ENCODE measurements at regions of chr6 and their contacts with region 1.

Region 1: GRCh38 chr6:26322645-26323482 is 42.1 kb upstream of the BTN3A2 start:
- DNase-seq: peak; percentile 90
- H3K4me3 ChIP-seq: peak overlapping the region; percentile 50 to 85 (median 85)
- H3K27ac ChIP-seq: peak overlapping the region; percentile 44
- H3K4me1 ChIP-seq: peaks cover 6% of the 10 kb centered on the region
- H3K27me3 ChIP-seq: no peaks in the 10 kb centered on the region
- CTCF ChIP-seq: no peak
- POLR2A ChIP-seq: no peak

Region 2: GRCh38 chr6:25717866-25718740 is 604.8 kb before region 1 on chr6:
- CTCF ChIA-PET with region 1: no interaction called
- POLR2A ChIA-PET with region 1: no interaction called
- dilution Hi-C with region 1: no loop called
- intact Hi-C with region 1: no loop called
- DNase-seq: peak; percentile 48
- H3K4me3 ChIP-seq: no peak overlapping the region
- H3K27ac ChIP-seq: no peak overlapping the region
- H3K4me1 ChIP-seq: peaks cover 23% of the 10 kb centered on the region
- H3K27me3 ChIP-seq: no peaks in the 10 kb centered on the region
- CTCF ChIP-seq: peak; percentile 35 to 42
- POLR2A ChIP-seq: no peak

Region 3: GRCh38 chr6:26249957-26250697 is 72.7 kb before region 1 on chr6:
- CTCF ChIA-PET with region 1: no interaction called
- POLR2A ChIA-PET with region 1: interaction called, 3 read pairs
- dilution Hi-C with region 1: no loop called
- intact Hi-C with region 1: loop called (anchors 2 kb)
- DNase-seq: peak; percentile 87
- H3K4me3 ChIP-seq: peak overlapping the region; percentile 27 to 85 (median 49)
- H3K27ac ChIP-seq: peak overlapping the region; percentile 67
- H3K4me1 ChIP-seq: peaks cover 3% of the 10 kb centered on the region
- H3K27me3 ChIP-seq: no peaks in the 10 kb centered on the region
- CTCF ChIP-seq: peak; percentile 28 to 52
- POLR2A ChIP-seq: peak; percentile 87

Region 4: GRCh38 chr6:26312501-26313390 is 10.1 kb before region 1 on chr6:
- CTCF ChIA-PET with region 1: interaction called, 4 read pairs
- POLR2A ChIA-PET with region 1: no interaction called
- dilution Hi-C with region 1: no loop called
- intact Hi-C with region 1: loop called (anchors 1 kb)
- DNase-seq: peak; percentile 83
- H3K4me3 ChIP-seq: peak overlapping the region; percentile 39 to 98 (median 95)
- H3K27ac ChIP-seq: peak overlapping the region; percentile 38
- H3K4me1 ChIP-seq: peaks cover 12% of the 10 kb centered on the region
- H3K27me3 ChIP-seq: peaks cover 4 to 9% of the 10 kb centered on the region in 2 experiments
- CTCF ChIP-seq: no peak
- POLR2A ChIP-seq: no peak

Region 5: DNA sequence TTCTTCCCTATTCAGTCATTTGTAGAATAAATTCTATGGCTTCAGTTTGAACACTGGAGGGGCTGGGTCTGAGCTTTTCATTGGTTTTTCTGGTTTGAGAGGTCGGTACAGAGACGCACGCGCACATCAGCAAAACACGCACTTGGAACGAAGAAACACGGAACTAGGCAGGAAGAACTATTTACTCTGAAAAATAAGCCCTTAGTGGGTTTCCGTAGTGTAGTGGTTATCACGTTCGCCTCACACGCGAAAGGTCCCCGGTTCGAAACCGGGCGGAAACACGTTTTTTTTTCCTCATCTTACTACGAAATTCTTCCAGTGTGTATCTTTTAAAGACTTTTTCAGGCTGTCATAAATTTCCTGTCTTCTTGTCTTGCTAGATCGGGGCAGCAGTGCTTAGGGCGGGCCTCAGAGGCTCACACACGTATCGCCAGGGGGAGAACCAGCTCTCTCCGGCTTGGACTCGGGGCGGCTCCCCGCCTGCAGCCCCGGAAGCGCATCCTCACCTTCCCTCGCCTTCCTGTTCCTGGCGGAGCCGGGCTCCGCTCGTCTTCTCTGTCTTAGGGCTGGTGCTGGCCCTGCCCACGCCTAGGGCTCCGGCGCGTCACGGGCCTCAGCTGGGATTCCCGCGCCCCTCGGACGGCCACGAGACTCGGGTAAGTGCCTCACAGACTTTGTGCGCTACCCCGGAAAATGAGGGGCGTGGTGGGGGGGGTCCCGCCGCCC is 215.1 kb after region 1 on chr6 and contains the start of gene HMGN4:
- CTCF ChIA-PET with region 1: interaction called, 5 read pairs
- POLR2A ChIA-PET with region 1: no interaction called
- dilution Hi-C with region 1: loop called (anchors 25 kb)
- intact Hi-C with region 1: no loop called
- DNase-seq: peak; percentile 93
- H3K4me3 ChIP-seq: peak within 1 kb of the TSS; percentile 87 to 99 (median 98)
- H3K27ac ChIP-seq: peak within 1 kb of the TSS; percentile 85
- H3K4me1 ChIP-seq: peaks cover 21% of the 10 kb centered on the region
- H3K27me3 ChIP-seq: no peaks in the 10 kb centered on the region
- CTCF ChIP-seq: no peak
- POLR2A ChIP-seq: no peak
- total RNA-seq, gene HMGN4: 33.7 and 36.9 TPM in 2 replicates

Region 6: DNA sequence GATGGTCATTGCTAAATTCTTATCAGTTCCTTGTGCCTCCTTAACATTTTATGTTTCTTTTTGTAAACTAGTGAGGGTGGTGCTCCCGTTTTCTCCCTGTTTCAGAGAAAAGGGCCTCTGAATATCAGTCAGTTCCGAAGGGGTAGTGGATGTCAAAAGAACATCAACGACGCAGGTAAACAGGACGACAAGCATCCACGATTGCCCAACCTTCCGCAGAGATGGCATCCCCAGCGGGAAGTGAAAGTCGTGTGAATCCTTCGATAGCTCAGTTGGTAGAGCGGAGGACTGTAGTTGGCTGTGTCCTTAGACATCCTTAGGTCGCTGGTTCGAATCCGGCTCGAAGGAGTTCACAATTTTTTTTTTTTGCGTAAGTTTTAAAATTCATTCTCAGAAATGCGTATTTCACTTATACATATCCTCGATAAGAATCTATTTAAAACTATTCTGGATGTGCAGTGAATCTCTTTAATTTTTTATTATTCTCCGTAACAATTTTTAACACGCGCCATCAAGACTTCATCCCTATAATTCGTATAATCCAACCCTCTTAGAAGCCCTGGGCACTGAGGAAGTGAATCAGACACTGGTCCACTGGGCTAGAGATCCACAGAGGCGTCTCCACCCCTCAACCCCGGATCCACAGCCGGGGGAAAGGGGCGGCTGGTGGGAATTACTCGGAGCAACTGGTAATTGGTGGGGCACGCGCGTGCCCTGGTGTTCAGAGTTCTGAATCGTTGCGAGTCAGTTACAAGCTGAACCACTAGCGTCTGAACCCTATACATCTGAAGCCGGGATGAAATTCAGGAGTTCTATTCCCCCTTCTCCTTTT is 246.0 kb after region 1 on chr6:
- CTCF ChIA-PET with region 1: interaction called, 4 read pairs
- POLR2A ChIA-PET with region 1: no interaction called
- dilution Hi-C with region 1: no loop called
- intact Hi-C with region 1: loop called (anchors 1 kb)
- DNase-seq: peak; percentile 97
- H3K4me3 ChIP-seq: peak overlapping the region; percentile 50 to 95 (median 90)
- H3K27ac ChIP-seq: no peak overlapping the region
- H3K4me1 ChIP-seq: peaks cover 6% of the 10 kb centered on the region
- H3K27me3 ChIP-seq: no peaks in the 10 kb centered on the region
- CTCF ChIP-seq: peak in 1 of 2 donors; percentile 46
- POLR2A ChIP-seq: no peak

Region 7: DNA sequence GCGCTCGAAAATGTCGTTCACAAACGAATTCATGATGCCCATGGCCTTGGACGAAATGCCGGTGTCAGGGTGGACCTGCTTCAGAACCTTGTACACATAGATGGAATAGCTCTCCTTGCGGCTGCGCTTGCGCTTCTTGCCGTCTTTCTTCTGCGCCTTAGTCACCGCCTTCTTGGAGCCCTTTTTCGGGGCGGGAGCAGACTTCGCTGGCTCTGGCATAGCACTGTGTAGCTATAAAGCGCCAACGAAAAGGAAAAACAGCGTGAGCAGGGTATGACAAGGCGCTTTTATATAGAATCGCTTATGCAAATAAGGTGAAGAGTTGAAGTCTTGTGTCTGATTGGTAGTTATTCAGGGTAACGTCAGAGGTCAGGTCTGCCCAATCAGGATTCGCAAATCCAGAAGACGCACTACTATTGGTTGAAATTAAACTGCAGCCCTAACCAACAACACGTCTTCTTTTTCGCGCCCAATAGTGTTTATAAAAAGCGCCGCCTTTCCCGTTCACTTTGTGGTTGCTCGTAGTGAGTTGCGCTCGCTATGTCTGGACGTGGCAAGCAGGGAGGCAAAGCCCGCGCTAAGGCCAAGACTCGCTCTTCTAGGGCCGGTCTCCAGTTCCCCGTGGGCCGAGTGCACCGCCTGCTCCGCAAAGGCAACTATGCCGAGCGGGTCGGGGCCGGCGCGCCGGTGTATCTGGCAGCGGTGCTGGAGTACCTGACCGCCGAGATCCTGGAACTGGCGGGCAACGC is 809.8 kb after region 1 on chr6:
- CTCF ChIA-PET with region 1: no interaction called
- POLR2A ChIA-PET with region 1: no interaction called
- dilution Hi-C with region 1: no loop called
- intact Hi-C with region 1: loop called (anchors 10 kb)
- DNase-seq: peak; percentile 100
- H3K4me3 ChIP-seq: peak overlapping the region; percentile 37 to 81 (median 59)
- H3K27ac ChIP-seq: peak overlapping the region; percentile 86
- H3K4me1 ChIP-seq: peaks cover 19% of the 10 kb centered on the region
- H3K27me3 ChIP-seq: no peaks in the 10 kb centered on the region
- CTCF ChIP-seq: no peak
- POLR2A ChIP-seq: peak; percentile 76

Region 8: DNA sequence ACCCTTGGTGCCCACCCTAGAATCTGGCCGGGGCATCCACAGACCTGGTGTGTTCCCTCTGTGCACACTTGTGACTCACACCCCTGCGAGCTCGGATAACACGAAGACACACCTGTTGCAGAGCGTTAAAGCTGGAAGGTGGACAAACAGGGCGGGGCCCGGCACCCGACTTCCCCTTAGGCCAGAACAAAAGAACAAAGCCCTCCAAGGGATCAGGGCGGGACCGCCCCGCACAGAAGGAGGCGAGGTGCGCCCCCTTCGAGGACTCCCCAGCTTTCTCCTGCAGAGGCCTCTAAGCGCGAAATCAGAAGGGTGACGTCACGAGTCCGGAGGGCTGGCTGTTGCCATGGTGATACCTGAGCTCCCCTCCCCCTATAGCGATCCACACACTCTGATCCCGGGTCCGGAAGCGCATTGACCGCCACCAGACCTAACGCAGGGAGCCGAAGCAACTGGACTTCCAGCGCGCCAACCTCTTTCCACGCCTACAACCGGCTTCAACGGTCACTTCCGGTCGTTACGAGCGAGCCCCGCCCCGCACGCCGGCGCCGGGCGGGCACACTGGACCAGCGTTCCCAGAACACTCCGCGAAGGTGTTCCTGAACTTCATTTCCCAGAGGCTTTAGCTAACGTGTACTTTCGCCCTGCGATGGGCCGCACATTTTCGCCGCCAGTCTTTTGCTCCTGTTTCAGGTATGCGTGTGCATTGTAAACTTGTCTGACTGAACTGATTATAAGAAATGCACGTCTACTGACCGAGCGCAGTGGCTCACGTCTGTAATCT is 1149.9 kb after region 1 on chr6 and contains the start of gene ZNF184:
- CTCF ChIA-PET with region 1: no interaction called
- POLR2A ChIA-PET with region 1: no interaction called
- dilution Hi-C with region 1: no loop called
- intact Hi-C with region 1: loop called (anchors 10 kb)
- DNase-seq: peak; percentile 98
- H3K4me3 ChIP-seq: peak within 1 kb of the TSS; percentile 68 to 94 (median 82)
- H3K27ac ChIP-seq: peak within 1 kb of the TSS; percentile 74
- H3K4me1 ChIP-seq: peaks cover 9% of the 10 kb centered on the region
- H3K27me3 ChIP-seq: peaks cover 9 to 14% of the 10 kb centered on the region in 2 experiments
- CTCF ChIP-seq: no peak
- POLR2A ChIP-seq: peak; percentile 84
- total RNA-seq, gene ZNF184: 5.4 and 6.5 TPM in 2 replicates

Measured in endothelial cell of umbilical vein (primary cell).